GM10248 (cell line): ENCODE measurements at regions of chr1 and their contacts with region 1.

Region 1: DNA sequence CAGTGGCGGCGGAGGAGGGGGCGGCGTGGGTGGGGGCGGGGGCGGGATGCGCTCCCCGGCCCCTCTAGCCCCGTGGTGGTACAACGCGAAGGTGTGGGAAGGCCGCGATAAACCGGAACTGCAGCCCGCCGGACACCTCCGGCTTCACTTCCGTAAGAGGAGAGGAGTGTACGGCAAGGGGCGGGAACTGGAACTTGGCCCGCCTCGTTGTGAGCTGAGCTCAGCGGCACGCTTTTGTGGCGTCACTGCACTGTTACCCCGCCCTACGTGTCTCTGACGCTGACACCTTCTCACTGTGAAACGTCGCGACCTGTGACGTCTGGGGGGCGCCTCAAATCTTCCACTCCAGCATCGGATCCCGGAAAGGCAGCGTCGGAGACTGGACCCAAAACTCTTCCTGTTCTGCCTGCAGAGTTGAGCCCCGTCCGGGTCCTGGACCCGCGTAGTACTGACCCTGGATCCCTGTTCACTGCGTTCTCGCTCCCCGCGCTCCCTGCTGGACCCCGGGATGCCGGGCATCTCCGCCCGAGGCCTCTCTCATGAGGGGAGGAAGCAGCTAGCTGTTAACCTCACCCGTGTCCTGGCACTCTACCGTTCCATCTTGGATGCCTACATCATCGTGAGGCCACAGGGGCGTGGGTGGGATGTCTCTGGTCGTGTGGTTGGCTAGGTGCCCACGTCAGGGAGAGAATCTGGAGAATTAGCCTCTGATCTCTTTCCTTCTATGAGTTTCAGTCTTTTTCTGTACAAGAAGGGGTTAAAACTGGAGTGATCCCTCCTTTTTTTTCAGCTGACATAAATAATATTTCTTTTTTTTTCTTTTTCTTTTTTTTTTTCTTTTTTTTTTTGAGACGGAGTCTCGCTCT is at the start of gene ISG20L2:
- DNase-seq: peak; percentile 94
- CTCF ChIP-seq: no peak

Region 2: GRCh38 chr1:156586309-156586708 is 142.5 kb before region 1 on chr1:
- CTCF ChIA-PET with region 1: no interaction called
- POLR2A ChIA-PET with region 1: no interaction called
- DNase-seq: no peak
- CTCF ChIP-seq: no peak

Region 3: DNA sequence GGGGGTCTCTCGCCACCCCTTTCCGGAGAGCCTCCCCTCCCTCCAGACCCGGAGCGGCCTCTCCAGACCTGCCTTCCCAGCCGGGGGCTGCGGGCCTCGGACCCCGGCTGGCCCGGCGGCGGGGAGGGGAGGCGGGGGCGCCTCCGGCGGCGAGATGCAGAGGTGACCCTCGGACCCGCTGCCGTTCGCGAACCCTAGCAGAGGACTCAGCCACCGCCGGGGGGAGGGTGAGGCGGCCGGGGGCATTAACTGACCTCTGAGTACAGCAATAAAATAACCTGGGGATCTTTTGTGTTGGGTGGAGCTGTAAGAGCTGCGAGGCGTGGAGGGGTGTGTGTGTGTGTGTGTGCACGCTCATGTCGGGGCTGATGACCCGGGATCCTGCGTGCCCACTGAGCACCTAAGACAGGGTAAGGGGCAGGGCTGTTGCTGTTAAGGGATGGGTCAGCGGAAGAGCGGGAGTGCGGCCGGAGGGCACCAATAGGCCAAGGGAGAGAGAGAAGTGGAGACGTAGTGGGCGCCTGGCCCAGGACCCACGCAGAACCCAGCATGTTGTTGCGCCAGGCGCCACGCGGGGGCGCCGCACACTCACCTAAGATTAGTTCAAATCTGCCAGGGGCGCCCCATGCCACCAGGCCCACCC is 103.3 kb before region 1 on chr1:
- CTCF ChIA-PET with region 1: interaction called, 24 read pairs
- POLR2A ChIA-PET with region 1: interaction called, 3 read pairs
- DNase-seq: peak; percentile 69
- CTCF ChIP-seq: peak; percentile 83

Region 4: GRCh38 chr1:156689035-156689952 is 39.5 kb before region 1 on chr1:
- CTCF ChIA-PET with region 1: interaction called, 597 read pairs
- POLR2A ChIA-PET with region 1: no interaction called
- DNase-seq: peak; percentile 87
- CTCF ChIP-seq: peak; percentile 87

Region 5: GRCh38 chr1:156751758-156752757 is 23.2 kb after region 1 on chr1:
- CTCF ChIA-PET with region 1: interaction called, 47 read pairs
- POLR2A ChIA-PET with region 1: interaction called, 5 read pairs
- DNase-seq: peak; percentile 94
- CTCF ChIP-seq: no peak

Region 6: DNA sequence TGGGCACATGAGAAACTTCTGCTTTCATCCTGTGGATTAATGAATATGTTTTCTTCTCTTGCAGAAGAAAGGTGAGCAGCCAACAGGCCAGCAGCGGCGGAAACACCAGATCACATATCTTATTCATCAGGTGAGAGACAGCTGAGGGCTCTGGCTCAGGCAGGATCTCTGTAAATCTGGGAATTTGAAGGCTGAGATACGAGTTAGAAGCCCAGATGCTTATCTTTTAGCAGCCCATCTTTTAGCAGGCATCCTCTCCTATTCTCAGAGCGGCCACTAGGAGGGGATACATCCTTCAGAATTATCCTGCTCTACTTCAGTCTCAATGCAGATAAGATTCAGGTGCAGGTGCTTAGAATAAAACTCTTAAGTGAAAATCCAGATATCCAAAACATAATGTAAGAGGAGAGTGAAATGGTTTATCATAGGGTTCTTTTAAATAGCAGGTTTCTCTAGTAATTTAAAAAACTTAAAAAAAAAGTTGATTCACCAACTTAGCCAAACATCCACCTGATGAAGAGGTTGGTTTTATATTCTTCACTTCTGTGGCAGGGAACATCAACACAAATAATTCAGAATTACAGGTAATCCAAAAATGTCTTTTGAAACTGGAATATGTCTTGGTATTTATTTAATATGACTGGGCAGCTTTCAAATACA is 68.5 kb after region 1 on chr1:
- CTCF ChIA-PET with region 1: interaction called, 54 read pairs
- POLR2A ChIA-PET with region 1: interaction called, 4 read pairs
- DNase-seq: peak; percentile 60
- CTCF ChIP-seq: peak; percentile 73

Region 7: DNA sequence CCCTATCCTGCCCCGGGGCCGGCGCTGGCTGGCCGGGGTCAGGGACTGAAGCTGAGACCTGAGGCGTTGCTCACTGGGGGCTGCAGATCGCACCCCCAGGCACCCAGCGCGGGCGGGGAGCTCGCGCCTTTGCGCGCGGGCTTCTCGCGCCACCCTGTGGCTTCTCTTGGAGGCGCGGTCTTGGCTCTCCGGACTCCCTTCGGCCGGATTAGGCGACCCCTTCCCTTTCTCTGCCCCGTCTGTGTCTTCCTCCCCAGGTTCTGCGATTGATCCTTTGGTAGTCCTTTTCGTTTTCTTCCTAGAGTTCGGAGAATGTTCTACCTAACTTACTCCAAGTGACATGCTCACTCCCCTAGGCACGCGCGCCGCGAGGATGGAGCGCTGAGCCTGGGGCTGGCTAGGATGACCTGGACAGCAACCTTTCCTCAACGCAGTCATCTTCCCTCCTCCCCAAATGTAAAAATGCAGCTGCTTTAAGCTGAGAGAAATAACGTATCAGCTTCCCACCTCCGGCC is 131.3 kb after region 1 on chr1:
- CTCF ChIA-PET with region 1: interaction called, 163 read pairs
- POLR2A ChIA-PET with region 1: interaction called, 6 read pairs
- DNase-seq: peak; percentile 85
- CTCF ChIP-seq: peak; percentile 77

Region 8: GRCh38 chr1:157240495-157241184 is 511.8 kb after region 1 on chr1:
- CTCF ChIA-PET with region 1: no interaction called
- POLR2A ChIA-PET with region 1: no interaction called
- DNase-seq: no peak
- CTCF ChIP-seq: no peak